ENCODE measurements at regions of chr1 and their contacts with region 1.

Region 1: DNA sequence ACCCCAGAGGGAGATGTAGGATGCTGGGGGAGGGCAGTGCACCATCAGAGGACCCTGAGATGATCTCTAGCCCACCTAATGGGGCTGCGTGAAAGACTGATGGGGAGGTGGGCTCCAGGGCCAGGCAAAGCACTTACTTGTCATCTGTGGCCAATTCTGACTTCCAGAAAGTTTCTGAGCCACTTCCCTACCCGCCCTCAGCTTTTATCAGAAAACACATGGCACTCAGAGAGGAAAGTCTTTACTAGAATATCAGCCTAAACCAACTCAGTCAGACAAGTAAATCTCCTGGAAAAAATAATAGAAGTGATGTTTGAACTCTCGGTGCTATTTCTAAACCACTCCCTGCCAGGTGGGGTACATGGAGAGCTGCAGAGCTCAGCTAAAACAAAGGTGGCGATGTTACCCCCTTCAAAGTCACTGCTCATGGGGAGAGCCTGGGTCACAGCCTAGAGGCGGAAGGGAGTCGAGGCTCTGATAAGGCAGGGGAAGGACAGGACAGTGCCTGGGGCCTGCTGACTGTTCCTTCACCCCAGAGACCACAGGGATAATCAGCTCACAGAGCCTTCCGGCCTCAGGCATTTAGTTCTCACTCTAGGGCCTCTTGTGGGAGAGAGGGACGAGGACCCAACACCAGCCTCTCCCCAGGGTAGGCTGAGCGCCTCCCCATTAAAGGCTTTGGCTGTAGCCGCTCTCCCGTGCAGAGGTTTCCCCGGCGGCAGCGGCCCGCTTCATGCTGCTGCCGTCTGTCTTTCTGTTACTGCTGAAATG is 14.2 kb downstream of the SMIM12 start:
- DNase-seq: no peak
- H3K4me3 ChIP-seq: no peak overlapping the region
- CTCF ChIP-seq: no peak
- POLR2A ChIP-seq: no peak

Region 2: DNA sequence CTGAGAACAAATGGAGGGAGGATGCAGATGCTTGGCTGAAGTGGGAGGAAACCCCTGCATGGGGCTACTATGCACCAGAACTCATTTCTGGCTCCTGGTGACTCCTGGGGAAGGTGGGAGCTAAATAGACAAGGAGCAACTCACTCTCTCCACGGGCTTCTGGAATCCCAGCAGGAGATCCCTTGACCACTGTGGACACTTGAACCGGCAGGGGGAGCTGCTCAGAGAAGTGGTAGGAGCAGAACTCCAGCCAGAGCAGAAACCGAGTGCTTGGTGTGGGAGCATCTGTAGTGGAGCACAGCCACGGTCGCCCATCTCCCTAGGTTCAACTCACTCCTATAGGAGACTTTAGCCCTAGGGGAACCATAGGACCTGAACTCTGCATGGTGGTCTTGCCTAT is 296.1 kb before region 1 on chr1:
- intact Hi-C with region 1: no loop called
- DNase-seq: no peak
- H3K4me3 ChIP-seq: no peak overlapping the region
- CTCF ChIP-seq: no peak
- POLR2A ChIP-seq: no peak

Region 3: DNA sequence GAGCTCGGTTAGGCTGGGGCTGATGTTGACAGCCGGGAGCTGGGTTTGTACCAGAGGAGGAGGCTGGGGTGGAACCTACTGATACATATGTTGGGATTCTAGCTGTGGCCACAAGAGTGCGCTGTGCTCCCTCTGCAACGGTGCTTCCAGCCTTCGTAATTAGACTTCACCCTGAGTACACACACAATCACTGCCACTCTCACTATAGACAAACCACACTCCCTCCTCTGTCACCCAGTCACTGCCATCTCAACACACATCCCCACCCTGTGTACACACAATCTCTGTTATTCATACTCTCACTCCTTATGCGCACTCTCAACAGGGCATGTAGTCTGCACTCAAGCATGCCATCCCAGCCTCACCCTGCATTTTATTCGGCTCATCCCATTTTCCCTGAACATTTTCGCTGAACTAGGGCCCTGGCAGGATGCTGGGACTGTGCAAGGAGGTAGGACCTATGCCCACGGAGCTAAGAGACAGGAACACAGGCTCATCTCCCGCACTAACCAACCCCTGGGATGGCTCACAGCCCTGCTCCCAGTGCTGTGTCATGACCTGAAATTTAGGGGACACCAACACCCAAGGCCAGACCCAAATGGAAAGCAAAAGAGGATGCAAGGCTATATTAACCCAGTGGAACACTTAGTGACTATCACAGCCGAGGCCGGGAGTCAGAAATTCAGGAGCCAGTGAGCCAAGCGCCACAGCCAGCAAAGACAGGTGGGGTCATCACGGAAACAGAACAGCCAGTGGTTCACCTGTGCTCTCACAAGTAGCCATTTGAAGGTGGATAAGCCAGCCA is 58.6 kb before region 1 on chr1:
- intact Hi-C with region 1: loop called (anchors 5 kb)
- DNase-seq: peak; percentile 75 to 89
- H3K4me3 ChIP-seq: no peak overlapping the region
- CTCF ChIP-seq: peak in 1 of 3 donors; percentile 69
- POLR2A ChIP-seq: no peak

Measured in lower leg skin (tissue), 4 donors.